K562 (cell line): ENCODE measurements at regions of chr11 and their contacts with region 1.

Region 1: GRCh38 chr11:8964324-8965320 is at the start of gene TMEM9B:
- DNase-seq: peak; percentile 83 to 92 (median 86)
- ATAC-seq: peak; percentile 92
- H3K4me3 ChIP-seq: peak within 1 kb of the TSS; percentile 96
- H3K27ac ChIP-seq: peak within 1 kb of the TSS; percentile 93
- H3K4me1 ChIP-seq: peaks cover 13 to 22% of the 10 kb centered on the region in 2 experiments; a peak in 4 of 5 replicates
- H3K27me3 ChIP-seq: no peaks in the 10 kb centered on the region
- CTCF ChIP-seq: no peak
- EP300 ChIP-seq: no peak
- POLR2A ChIP-seq: peak; percentile 94
- RAD21 ChIP-seq: no peak; a peak in 1 of 4 replicates
- polyA plus RNA-seq, gene TMEM9B: 7.7 to 9.6 TPM

Region 2: GRCh38 chr11:8604078-8604723 is 360.4 kb before region 1 on chr11:
- CTCF ChIA-PET with region 1: no interaction called
- POLR2A ChIA-PET with region 1: no interaction called
- in situ Hi-C with region 1: no loop called
- intact Hi-C with region 1: loop called (anchors 10 kb)
- DNase-seq: peak; percentile 60 to 70 (median 68)
- ATAC-seq: peak; percentile 97
- H3K4me3 ChIP-seq: no peak overlapping the region
- H3K27ac ChIP-seq: no peak overlapping the region
- H3K4me1 ChIP-seq: peaks cover 0 to 3% of the 10 kb centered on the region in 2 experiments; a peak in 1 of 5 replicates
- H3K27me3 ChIP-seq: peaks cover 6 to 14% of the 10 kb centered on the region in 2 experiments
- CTCF ChIP-seq: peak; percentile 76 to 90 (median 81)
- EP300 ChIP-seq: no peak
- POLR2A ChIP-seq: no peak
- RAD21 ChIP-seq: peak; percentile 20 to 49; a peak in 3 of 4 replicates

Region 3: GRCh38 chr11:8813658-8814057 is 151.0 kb before region 1 on chr11:
- CTCF ChIA-PET with region 1: no interaction called
- POLR2A ChIA-PET with region 1: no interaction called
- in situ Hi-C with region 1: no loop called
- intact Hi-C with region 1: loop called (anchors 1 kb)
- DNase-seq: peak; percentile 79 to 84 (median 80)
- ATAC-seq: peak; percentile 95
- H3K4me3 ChIP-seq: no peak overlapping the region
- H3K27ac ChIP-seq: no peak overlapping the region
- H3K4me1 ChIP-seq: peaks cover 0 to 5% of the 10 kb centered on the region in 2 experiments; a peak in 4 of 5 replicates
- H3K27me3 ChIP-seq: peaks cover 11 to 18% of the 10 kb centered on the region in 2 experiments
- CTCF ChIP-seq: peak; percentile 82 to 94 (median 82)
- EP300 ChIP-seq: no peak
- POLR2A ChIP-seq: no peak
- RAD21 ChIP-seq: peak; percentile 62 to 70

Region 4: DNA sequence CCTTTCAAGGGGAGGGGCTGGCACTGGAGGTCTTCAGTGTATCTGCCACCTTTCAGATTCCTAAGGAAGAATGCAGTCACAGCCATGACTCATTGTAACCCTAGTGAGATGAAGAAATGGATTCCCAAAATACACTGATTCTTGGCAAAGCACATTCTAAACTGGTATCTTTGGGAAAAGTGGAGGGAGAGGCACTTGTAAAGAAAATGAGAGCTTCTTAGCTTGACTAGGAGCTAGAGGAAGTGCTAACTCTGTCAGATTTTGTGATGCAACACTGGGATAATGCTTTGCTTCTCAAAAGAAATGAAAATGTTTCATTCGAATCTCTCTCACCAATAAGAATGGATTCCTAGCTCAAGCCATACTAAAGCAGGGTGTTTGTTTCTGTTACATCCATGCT is 24.8 kb after region 1 on chr11:
- CTCF ChIA-PET with region 1: no interaction called
- POLR2A ChIA-PET with region 1: interaction called, 12 read pairs
- in situ Hi-C with region 1: no loop called
- intact Hi-C with region 1: no loop called
- DNase-seq: peak in 3 of 4 experiments; percentile 20 to 37 (median 30)
- ATAC-seq: peak; percentile 30; the same call in 1 of the 3 replicates
- H3K4me3 ChIP-seq: no peak overlapping the region
- H3K27ac ChIP-seq: peak overlapping the region; percentile 55; the same call in 2 of the 3 replicates
- H3K4me1 ChIP-seq: peaks cover 6 to 37% of the 10 kb centered on the region in 2 experiments
- H3K27me3 ChIP-seq: no peaks in the 10 kb centered on the region
- CTCF ChIP-seq: no peak
- EP300 ChIP-seq: no peak
- POLR2A ChIP-seq: no peak
- RAD21 ChIP-seq: no peak

Region 5: GRCh38 chr11:9137293-9138132 is 172.9 kb after region 1 on chr11:
- CTCF ChIA-PET with region 1: no interaction called
- POLR2A ChIA-PET with region 1: no interaction called
- in situ Hi-C with region 1: no loop called
- intact Hi-C with region 1: loop called (anchors 2 kb)
- DNase-seq: peak; percentile 74 to 79 (median 76)
- ATAC-seq: peak; percentile 99
- H3K4me3 ChIP-seq: no peak overlapping the region
- H3K27ac ChIP-seq: no peak overlapping the region
- H3K4me1 ChIP-seq: no peaks in the 10 kb centered on the region
- H3K27me3 ChIP-seq: no peaks in the 10 kb centered on the region
- CTCF ChIP-seq: peak; percentile 91 to 95 (median 94)
- EP300 ChIP-seq: peak; percentile 10; the same call in 1 of the 2 replicates
- POLR2A ChIP-seq: no peak
- RAD21 ChIP-seq: peak; percentile 84 to 92